ENCODE measurements at regions of chr1 and their contacts with region 1.

Region 1: GRCh38 chr1:213947200-213947775 is 40.5 kb upstream of the PROX1 start:
- DNase-seq: no peak
- ATAC-seq: no peak
- H3K4me3 ChIP-seq: no peak overlapping the region
- H3K27ac ChIP-seq: no peak overlapping the region
- H3K4me1 ChIP-seq: no peaks in the 10 kb centered on the region
- H3K27me3 ChIP-seq: peaks cover 0 to 16% (median 0%) of the 10 kb centered on the region in 7 donors
- CTCF ChIP-seq: no peak

Region 2: GRCh38 chr1:213669964-213670691 is 277.2 kb before region 1 on chr1:
- intact Hi-C with region 1: no loop called
- DNase-seq: no peak
- ATAC-seq: no peak
- H3K4me3 ChIP-seq: no peak overlapping the region
- H3K27ac ChIP-seq: no peak overlapping the region
- H3K4me1 ChIP-seq: no peaks in the 10 kb centered on the region
- H3K27me3 ChIP-seq: no peaks in the 10 kb centered on the region
- CTCF ChIP-seq: no peak

Region 3: GRCh38 chr1:213973129-213973528 is 25.8 kb after region 1 on chr1:
- intact Hi-C with region 1: loop called in 1 of 10 experiments (anchors 2 kb)
- DNase-seq: no peak
- ATAC-seq: no peak
- H3K4me3 ChIP-seq: no peak overlapping the region
- H3K27ac ChIP-seq: no peak overlapping the region
- H3K4me1 ChIP-seq: no peaks in the 10 kb centered on the region
- H3K27me3 ChIP-seq: peaks cover 0 to 59% (median 23%) of the 10 kb centered on the region in 7 donors
- CTCF ChIP-seq: no peak

Measured in heart right ventricle (tissue), 16 donors.